Posterior vena cava (tissue), 2 donors: ENCODE measurements at regions of chr6 and their contacts with region 1.

Region 1: DNA sequence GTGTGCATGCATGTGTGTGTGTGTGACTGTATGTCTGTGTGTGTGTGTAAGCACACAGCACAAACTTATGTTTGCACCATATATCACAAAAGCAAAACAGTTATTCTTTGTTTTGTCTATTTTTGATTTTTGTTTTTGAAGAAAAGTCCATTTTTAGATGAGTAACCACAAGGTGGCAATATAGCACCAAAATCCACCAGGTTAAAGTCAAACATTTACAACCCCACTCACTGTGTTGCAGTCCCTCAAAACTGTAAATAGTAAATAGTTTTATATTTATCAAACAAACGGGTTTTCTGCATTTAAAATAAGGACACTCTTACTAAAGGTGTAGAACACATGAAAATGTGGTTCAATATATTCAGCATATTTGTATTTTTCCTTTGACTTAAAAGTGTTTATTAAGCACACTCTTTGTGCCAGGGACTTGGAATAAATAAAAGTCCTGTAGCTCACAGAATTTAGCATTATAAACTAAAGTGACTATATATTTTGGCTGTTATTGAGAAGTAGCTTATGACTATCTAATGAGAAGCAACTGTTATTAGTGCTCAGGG is 118.5 kb downstream of the GFRAL start:
- DNase-seq: no peak

Region 2: DNA sequence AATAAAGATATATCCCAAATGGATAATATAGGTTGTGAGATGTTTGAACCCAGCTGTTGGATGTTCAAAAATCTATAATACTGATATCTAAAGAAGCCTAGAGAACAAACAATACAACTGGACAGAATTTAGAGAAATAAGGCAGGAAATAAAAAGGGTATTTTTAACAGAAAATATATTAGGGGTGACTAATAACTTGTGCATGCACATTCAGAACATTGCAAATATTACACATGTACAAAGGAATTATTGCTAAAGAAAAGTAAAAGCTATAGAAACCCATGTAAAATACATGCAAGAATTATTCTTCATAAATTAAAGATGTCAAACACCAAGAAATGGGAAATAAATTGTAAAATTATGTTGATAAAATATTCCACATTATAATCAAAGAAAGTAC is 304.1 kb before region 1 on chr6:
- intact Hi-C with region 1: no loop called
- DNase-seq: no peak

Region 3: DNA sequence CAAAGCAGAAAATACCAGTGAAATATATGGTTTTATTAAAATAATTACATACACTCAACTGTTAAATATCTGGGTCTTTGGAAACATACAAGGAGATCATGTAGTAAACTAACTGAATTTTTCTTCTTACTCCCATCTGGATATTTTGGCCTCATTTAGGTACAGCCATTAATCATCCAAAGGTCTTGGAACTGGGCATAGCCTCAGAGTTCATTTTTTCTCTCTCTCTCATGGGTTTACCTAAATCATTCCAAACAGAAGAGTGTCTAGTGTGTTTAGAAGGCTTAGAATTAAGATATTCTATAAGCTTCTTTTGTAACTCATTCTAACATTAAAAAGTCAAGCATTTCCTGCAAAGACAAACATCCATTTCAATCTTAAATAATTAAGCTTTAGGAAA is 53.9 kb after region 1 on chr6:
- intact Hi-C with region 1: no loop called
- DNase-seq: no peak

Region 4: DNA sequence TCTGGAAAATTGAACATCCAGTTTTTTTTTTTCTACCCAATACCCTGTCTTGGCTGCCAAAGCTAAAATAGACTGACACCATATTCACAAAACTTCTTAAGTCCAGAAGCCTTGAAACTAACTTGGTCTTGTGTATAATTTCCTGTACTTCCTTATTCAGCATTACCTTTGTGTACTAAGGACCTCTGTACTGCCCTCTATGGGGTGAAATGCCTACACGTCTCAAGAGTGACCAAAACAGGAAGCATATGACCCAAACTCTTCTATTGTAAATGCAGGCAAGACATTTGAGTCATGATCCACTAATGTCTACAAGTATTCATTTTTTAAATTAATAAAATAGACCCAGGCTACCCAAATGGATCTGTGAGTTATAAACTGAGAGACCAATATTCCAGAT is 82.9 kb after region 1 on chr6:
- intact Hi-C with region 1: no loop called
- DNase-seq: no peak

Region 5: GRCh38 chr6:55594442-55594841 is 148.7 kb after region 1 on chr6:
- intact Hi-C with region 1: no loop called
- DNase-seq: no peak

Region 6: GRCh38 chr6:55953335-55953734 is 507.6 kb after region 1 on chr6:
- intact Hi-C with region 1: loop called in 1 of 2 experiments (anchors 10 kb)
- DNase-seq: no peak